IMR-90 (cell line): ENCODE measurements at regions of chr1 and their contacts with region 1.

Region 1: GRCh38 chr1:159132271-159132881 is 39.0 kb upstream of the CADM3 start:
- DNase-seq: peak; percentile 56
- ATAC-seq: peak; percentile 71
- H3K4me3 ChIP-seq: no peak overlapping the region
- H3K27ac ChIP-seq: no peak overlapping the region
- H3K4me1 ChIP-seq: no peaks in the 10 kb centered on the region
- H3K27me3 ChIP-seq: peaks cover 1% of the 10 kb centered on the region; the same call in 1 of the 2 replicates
- CTCF ChIP-seq: peak; percentile 92
- POLR2A ChIP-seq: no peak
- RAD21 ChIP-seq: peak; percentile 77

Region 2: DNA sequence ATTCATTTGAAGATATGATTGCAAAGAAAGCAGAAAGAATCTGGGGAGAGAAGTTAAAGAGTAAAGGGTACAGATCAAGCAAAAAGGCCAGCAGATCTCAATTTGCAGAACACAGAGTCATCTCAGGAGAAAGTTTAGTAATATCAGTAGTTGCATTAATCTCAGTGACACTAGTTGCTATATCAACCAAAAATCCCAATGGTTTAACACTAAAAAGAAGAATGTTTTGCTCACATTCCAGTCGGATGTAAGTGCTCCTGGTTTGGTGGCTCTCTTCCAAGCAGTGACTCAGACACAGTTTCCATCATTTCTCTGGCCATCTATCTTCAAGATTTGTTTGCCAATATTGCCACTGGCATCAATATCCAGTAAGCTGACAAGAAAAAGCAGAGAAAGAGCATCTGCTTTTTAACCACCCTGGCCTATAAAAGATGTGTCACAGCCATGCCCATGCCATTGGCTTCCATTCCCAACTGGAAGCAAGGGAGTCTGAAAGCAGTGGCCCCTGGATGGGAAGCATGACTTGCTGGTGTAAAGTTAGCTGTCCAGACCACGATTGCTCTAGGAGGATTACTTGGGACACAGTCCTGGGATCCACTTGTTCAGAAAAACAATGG is 10.3 kb before region 1 on chr1:
- CTCF ChIA-PET with region 1: interaction called, 11 read pairs
- POLR2A ChIA-PET with region 1: no interaction called
- dilution Hi-C with region 1: no loop called
- in situ Hi-C with region 1: no loop called
- intact Hi-C with region 1: no loop called
- DNase-seq: peak; percentile 29
- ATAC-seq: no peak
- H3K4me3 ChIP-seq: no peak overlapping the region
- H3K27ac ChIP-seq: no peak overlapping the region
- H3K4me1 ChIP-seq: no peaks in the 10 kb centered on the region
- H3K27me3 ChIP-seq: peaks cover 3% of the 10 kb centered on the region; the same call in 1 of the 2 replicates
- CTCF ChIP-seq: no peak
- POLR2A ChIP-seq: no peak
- RAD21 ChIP-seq: no peak

Region 3: GRCh38 chr1:159197561-159198557 is 65.5 kb after region 1 on chr1:
- CTCF ChIA-PET with region 1: no interaction called
- POLR2A ChIA-PET with region 1: no interaction called
- dilution Hi-C with region 1: no loop called
- in situ Hi-C with region 1: no loop called
- intact Hi-C with region 1: loop called (anchors 1 kb)
- DNase-seq: peak; percentile 72
- ATAC-seq: peak; percentile 100
- H3K4me3 ChIP-seq: no peak overlapping the region
- H3K27ac ChIP-seq: no peak overlapping the region
- H3K4me1 ChIP-seq: no peaks in the 10 kb centered on the region
- H3K27me3 ChIP-seq: no peaks in the 10 kb centered on the region; the same call in 1 of the 2 replicates
- CTCF ChIP-seq: peak; percentile 93
- POLR2A ChIP-seq: no peak
- RAD21 ChIP-seq: peak; percentile 68

Region 4: DNA sequence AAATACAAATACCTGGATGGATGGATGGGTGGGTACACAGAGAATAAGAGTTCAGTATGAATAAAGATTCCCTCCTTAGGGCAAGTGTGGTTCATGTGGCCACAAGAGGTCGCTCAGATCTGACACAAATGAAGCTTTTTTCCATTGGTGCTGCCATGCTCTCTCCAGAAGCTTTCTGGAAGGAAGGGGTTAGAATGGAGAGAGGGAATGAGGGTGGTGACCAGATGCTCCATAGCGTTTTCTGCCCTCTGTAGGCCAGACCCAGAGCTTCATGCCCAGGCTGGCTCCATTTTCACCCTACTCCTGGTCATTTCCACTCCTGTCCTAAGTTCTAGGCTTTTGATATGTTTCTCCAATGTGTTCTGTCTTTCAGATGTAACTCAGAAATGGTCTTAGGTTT is 666.5 kb after region 1 on chr1:
- CTCF ChIA-PET with region 1: interaction called, 4 read pairs
- POLR2A ChIA-PET with region 1: no interaction called
- dilution Hi-C with region 1: no loop called
- in situ Hi-C with region 1: no loop called
- intact Hi-C with region 1: loop called (anchors 10 kb)
- DNase-seq: peak; percentile 85
- ATAC-seq: peak; percentile 99
- H3K4me3 ChIP-seq: no peak overlapping the region
- H3K27ac ChIP-seq: no peak overlapping the region
- H3K4me1 ChIP-seq: no peaks in the 10 kb centered on the region
- H3K27me3 ChIP-seq: peaks cover 38% of the 10 kb centered on the region
- CTCF ChIP-seq: peak; percentile 82
- POLR2A ChIP-seq: no peak
- RAD21 ChIP-seq: peak; percentile 91